ENCODE measurements at regions of chr19 and their contacts with region 1.

Region 1: DNA sequence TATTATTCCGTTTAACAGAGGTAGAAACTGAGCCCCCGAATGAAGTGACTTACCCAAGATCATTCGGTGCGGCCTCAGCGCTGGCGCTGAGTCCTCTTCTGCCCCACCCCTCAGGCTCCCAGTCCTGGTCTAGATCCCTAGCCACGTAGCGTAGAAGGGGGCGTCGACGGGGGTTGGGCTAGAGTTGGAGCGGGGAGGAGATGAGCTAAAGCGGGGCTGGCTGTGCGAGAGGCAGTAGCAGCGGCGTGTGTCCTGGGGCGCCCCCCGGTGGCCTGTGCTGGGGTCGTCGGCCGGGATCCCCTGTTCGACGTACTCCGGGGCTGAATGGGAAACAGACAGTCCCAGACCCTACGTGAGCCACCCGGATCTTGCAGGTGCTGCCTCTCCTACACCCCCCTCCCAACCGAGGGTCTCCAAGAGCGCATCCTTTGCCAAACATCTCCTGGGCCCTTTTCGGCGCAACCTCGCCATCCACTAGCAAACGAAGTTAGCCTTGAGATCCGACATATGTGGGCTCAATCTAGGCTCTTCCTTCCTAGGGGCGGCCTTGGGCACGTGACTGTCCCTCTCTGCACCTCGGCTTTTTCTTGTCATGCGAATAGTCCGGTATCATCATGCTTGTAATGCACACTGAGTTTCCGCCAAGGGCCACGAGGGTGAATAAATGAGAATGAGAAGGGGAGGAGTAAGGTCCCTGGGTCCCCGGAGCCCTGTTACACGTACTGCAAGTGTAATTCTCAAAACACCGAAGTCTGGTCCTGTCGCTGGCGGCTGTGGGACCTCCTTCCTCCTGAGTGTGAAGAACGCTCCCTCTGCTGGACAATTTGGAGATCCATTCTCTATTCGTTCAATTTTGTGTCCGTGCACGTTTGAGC is 47.7 kb downstream of the CYP4F22 start:
- DNase-seq: peak; percentile 93
- ATAC-seq: peak; percentile 91
- H3K4me3 ChIP-seq: peak overlapping the region; percentile 40 to 53
- H3K27ac ChIP-seq: peak overlapping the region; percentile 25
- H3K4me1 ChIP-seq: peaks cover 5 to 28% of the 10 kb centered on the region in 2 experiments; a peak in 3 of 4 replicates
- H3K27me3 ChIP-seq: no peaks in the 10 kb centered on the region
- CTCF ChIP-seq: peak; percentile 77 to 91 (median 90)
- POLR2A ChIP-seq: no peak
- RAD21 ChIP-seq: peak; percentile 95

Region 2: DNA sequence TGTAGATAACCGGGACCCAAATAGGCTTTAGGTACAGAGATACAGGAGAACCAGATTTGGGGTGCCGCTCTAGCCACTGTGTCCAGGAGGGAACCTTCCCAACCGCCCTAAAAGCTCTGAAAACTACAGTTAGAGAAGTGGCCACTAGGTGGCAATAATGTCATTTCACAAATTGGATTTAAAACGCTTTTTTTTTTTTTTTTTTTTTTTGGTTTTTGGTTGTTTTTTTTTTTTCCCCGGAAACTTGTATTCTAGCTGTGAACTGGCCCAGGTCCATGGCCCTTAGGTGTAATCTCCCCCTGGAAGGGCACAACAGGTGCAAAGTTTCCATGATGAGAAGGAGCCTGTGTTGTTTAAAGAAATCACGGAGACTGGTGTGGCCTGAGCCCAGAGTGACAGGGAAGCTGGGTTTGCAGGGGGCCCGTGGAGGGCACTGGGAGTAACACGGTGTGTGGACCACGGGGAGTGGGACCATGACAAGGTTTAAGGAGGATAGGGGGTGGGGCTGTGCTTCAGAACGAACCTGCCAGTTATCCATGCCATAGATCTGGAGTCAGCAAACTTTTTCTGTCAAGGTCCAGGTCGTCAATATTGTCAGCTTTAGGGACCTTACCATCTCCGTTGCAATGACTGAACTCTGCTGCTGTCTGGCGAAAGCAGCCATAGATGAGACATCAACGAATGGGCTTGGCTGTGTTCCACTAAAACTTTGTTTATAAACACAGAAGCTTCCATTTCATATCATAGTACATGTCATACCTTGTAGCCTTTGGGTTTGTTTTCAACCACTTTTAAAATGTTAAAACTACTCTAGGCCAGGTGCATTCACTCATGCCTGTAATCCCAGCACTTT is 463.9 kb before region 1 on chr19:
- CTCF ChIA-PET with region 1: interaction called, 19 read pairs
- POLR2A ChIA-PET with region 1: interaction called, 3 read pairs
- RAD21 ChIA-PET with region 1: interaction called in 1 of 2 experiments, 6 read pairs
- intact Hi-C with region 1: loop called (anchors 2 kb)
- DNase-seq: peak; percentile 66
- ATAC-seq: peak; percentile 78
- H3K4me3 ChIP-seq: no peak overlapping the region
- H3K27ac ChIP-seq: no peak overlapping the region
- H3K4me1 ChIP-seq: peaks cover 0 to 4% of the 10 kb centered on the region in 2 experiments; a peak in 1 of 4 replicates
- H3K27me3 ChIP-seq: peaks cover 14% of the 10 kb centered on the region; the same call in 1 of the 2 replicates
- CTCF ChIP-seq: peak; percentile 56 to 83 (median 79)
- POLR2A ChIP-seq: no peak
- RAD21 ChIP-seq: peak; percentile 80

Region 3: GRCh38 chr19:15154002-15154612 is 401.9 kb before region 1 on chr19:
- CTCF ChIA-PET with region 1: no interaction called
- POLR2A ChIA-PET with region 1: no interaction called
- RAD21 ChIA-PET with region 1: no interaction called
- intact Hi-C with region 1: loop called (anchors 5 kb)
- DNase-seq: peak; percentile 37
- ATAC-seq: peak; percentile 66
- H3K4me3 ChIP-seq: no peak overlapping the region
- H3K27ac ChIP-seq: no peak overlapping the region
- H3K4me1 ChIP-seq: no peaks in the 10 kb centered on the region
- H3K27me3 ChIP-seq: no peaks in the 10 kb centered on the region
- CTCF ChIP-seq: peak; percentile 49 to 74 (median 71); a peak in 5 of 6 replicates
- POLR2A ChIP-seq: no peak
- RAD21 ChIP-seq: peak; percentile 69

Region 4: GRCh38 chr19:15264061-15264932 is 291.7 kb before region 1 on chr19:
- CTCF ChIA-PET with region 1: interaction called, 13 read pairs
- POLR2A ChIA-PET with region 1: interaction called, 3 read pairs
- RAD21 ChIA-PET with region 1: no interaction called
- intact Hi-C with region 1: loop called (anchors 1 kb)
- DNase-seq: peak; percentile 45
- ATAC-seq: peak; percentile 80
- H3K4me3 ChIP-seq: no peak overlapping the region
- H3K27ac ChIP-seq: no peak overlapping the region
- H3K4me1 ChIP-seq: no peaks in the 10 kb centered on the region
- H3K27me3 ChIP-seq: no peaks in the 10 kb centered on the region
- CTCF ChIP-seq: peak; percentile 81 to 90 (median 87); a peak in 5 of 6 replicates
- POLR2A ChIP-seq: no peak
- RAD21 ChIP-seq: peak; percentile 90

Region 5: DNA sequence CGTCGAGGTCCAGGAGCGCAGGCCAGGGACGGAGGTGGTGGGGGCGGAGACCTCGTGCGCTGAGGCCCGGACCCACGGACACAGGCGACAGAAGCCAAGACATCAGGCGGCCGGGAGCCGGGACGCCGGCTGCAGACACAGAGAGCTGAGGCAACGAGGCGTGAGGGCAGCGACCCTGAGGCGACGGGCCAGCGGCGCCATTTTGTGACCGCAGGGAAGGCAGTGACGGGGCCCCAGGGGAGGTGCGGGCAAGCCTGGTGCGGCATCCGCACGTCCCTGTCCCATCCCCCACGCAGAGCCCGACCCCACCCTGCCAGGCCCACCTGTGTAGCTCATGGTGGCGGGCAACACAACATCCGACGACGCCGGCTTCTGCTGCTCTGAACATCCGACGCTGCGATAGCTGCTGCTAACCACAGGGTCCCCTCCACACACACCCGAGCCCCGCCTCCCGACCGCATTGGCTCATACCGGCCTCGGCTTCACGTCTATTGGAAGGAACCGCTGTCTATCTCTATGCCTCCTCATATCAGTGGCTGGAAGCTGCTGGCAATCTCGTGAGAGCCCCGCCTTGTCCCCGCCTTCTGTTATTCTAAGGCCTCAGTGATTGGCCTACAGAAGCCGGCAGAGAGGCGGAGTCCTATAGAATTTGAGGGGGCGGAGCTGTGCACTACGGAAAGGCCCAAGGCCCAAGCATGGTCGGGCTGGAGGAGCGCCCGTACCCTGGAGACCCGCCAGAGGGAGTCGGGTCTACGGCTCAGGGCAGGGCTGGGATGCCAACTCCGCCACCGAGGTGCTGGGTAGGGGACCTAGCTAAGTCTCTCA is 137.2 kb before region 1 on chr19 and contains the start of gene AKAP8L:
- CTCF ChIA-PET with region 1: interaction called, 68 read pairs
- POLR2A ChIA-PET with region 1: interaction called, 21 read pairs
- RAD21 ChIA-PET with region 1: interaction called, 4 to 9 read pairs
- intact Hi-C with region 1: loop called (anchors 1 kb)
- DNase-seq: peak; percentile 100
- ATAC-seq: peak; percentile 96
- H3K4me3 ChIP-seq: peak within 1 kb of the TSS; percentile 96 to 100
- H3K27ac ChIP-seq: peak within 1 kb of the TSS; percentile 89
- H3K4me1 ChIP-seq: peaks cover 15 to 16% of the 10 kb centered on the region in 2 experiments; a peak in 3 of 4 replicates
- H3K27me3 ChIP-seq: no peaks in the 10 kb centered on the region
- CTCF ChIP-seq: peak; percentile 69 to 78 (median 74)
- POLR2A ChIP-seq: peak; percentile 86
- RAD21 ChIP-seq: peak; percentile 71
- total RNA-seq, gene AKAP8L: 106 TPM

Region 6: DNA sequence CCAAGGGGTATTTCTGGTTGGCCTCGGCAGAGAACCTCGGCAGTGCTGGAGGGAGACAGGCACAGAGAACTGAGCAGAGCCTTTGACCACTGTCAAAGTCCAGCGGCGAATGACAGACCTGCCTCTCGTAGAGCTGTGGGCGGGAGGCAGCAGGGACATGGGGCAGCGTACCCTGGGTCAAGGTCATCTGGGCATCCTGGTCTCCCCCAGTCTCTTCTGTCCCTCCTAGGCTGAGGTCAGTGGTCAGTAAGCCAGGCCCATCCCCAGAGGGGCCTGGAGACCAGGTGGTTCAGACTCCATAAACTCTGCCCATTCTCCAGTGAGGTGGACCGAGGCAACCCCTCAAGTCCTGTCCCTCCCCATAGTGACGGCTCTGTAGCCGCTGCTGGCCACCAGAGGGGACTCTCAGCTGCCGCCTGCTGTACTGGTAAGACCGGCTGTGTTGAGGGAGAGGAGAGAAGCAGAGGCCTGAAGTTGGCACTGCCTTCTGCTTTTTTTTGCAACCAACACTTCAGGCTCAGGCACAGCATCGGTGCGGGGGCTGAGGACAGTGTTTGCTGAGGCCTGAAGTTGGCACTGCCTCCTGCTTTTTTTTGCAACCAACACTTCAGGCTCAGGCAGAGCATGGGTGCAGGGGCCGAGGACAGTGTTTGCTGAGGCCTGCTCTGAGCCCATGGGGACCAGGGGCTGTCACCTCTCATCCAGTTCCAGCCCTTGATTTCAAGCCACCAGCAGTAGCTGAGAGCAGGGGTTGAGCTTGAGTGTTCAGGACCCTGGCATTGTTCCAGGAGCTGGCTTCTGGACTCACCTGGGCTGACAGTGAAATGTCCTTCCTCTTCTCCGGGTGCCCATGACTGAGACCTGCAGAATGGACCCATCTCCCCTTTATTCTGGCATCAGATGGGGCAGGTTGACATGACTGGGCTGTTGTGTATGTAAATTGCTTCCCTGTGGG is 76.3 kb before region 1 on chr19 and contains the start of gene PGLYRP2:
- CTCF ChIA-PET with region 1: interaction called, 5 read pairs
- POLR2A ChIA-PET with region 1: interaction called, 3 read pairs
- RAD21 ChIA-PET with region 1: no interaction called
- intact Hi-C with region 1: loop called (anchors 1 kb)
- DNase-seq: no peak
- ATAC-seq: peak; percentile 49; the same call in 1 of the 2 replicates
- H3K4me3 ChIP-seq: no peak within 1 kb of the TSS
- H3K27ac ChIP-seq: no peak within 1 kb of the TSS
- H3K4me1 ChIP-seq: no peaks in the 10 kb centered on the region
- H3K27me3 ChIP-seq: no peaks in the 10 kb centered on the region
- CTCF ChIP-seq: peak; percentile 15 to 33 (median 31); a peak in 4 of 6 replicates
- POLR2A ChIP-seq: no peak
- RAD21 ChIP-seq: peak; percentile 52
- total RNA-seq, gene PGLYRP2: not detected

Region 7: GRCh38 chr19:15511671-15512424 is 44.1 kb before region 1 on chr19:
- CTCF ChIA-PET with region 1: no interaction called
- POLR2A ChIA-PET with region 1: no interaction called
- RAD21 ChIA-PET with region 1: no interaction called
- intact Hi-C with region 1: no loop called
- DNase-seq: no peak
- ATAC-seq: no peak
- H3K4me3 ChIP-seq: no peak overlapping the region
- H3K27ac ChIP-seq: no peak overlapping the region
- H3K4me1 ChIP-seq: peaks cover 0 to 23% of the 10 kb centered on the region in 2 experiments; a peak in 3 of 4 replicates
- H3K27me3 ChIP-seq: no peaks in the 10 kb centered on the region
- CTCF ChIP-seq: no peak
- POLR2A ChIP-seq: no peak
- RAD21 ChIP-seq: no peak

Measured in HCT116 (cell line).